Posterior vena cava (tissue), 2 donors: ENCODE measurements at regions of chr3 and their contacts with region 1.

Region 1: DNA sequence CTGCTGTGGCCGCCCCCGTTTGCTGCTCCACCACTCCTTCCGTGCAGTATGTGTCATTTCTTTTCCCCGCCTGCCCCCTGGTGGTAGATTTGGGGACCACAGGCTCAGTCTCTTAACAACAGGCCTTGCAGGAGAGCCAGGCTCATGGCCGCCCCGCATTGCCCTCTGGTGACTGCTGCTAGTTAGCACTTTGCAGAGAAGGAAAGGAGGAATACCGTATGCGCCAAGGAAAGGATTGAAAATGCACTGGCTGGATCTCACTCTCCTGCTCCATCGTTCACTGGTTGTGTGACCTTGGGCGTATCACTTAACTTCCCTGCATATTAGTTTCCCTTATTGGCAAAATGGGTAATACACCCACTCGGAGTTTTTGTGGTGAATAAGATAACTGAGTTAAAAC is 39.3 kb upstream of the PXYLP1 start:
- DNase-seq: peak; percentile 99

Region 2: DNA sequence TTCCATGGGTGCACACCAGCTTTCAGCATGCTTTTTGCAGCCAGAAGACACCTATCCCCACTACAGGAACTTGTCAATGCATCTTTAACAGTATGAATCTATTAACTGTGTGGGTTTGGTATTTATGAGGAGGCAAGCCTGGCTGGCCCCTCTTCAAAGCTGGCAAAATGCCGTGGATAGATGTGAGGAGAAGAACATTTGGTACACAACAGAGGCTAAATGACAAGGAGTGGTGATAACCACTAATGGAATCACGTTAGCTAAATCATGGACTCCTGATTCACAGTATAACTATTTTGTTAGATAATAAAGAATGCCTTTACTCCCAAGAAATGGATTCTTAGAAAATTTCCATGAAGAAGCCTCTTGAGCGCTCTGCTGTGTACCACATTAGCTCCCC is 1070.2 kb before region 1 on chr3:
- intact Hi-C with region 1: loop called in 1 of 2 experiments (anchors 5 kb)
- DNase-seq: no peak

Region 3: GRCh38 chr3:140341203-140341602 is 851.1 kb before region 1 on chr3:
- intact Hi-C with region 1: no loop called
- DNase-seq: no peak

Region 4: GRCh38 chr3:141000027-141000663 is 192.2 kb before region 1 on chr3:
- intact Hi-C with region 1: loop called (anchors 5 kb)
- DNase-seq: peak; percentile 85

Region 5: DNA sequence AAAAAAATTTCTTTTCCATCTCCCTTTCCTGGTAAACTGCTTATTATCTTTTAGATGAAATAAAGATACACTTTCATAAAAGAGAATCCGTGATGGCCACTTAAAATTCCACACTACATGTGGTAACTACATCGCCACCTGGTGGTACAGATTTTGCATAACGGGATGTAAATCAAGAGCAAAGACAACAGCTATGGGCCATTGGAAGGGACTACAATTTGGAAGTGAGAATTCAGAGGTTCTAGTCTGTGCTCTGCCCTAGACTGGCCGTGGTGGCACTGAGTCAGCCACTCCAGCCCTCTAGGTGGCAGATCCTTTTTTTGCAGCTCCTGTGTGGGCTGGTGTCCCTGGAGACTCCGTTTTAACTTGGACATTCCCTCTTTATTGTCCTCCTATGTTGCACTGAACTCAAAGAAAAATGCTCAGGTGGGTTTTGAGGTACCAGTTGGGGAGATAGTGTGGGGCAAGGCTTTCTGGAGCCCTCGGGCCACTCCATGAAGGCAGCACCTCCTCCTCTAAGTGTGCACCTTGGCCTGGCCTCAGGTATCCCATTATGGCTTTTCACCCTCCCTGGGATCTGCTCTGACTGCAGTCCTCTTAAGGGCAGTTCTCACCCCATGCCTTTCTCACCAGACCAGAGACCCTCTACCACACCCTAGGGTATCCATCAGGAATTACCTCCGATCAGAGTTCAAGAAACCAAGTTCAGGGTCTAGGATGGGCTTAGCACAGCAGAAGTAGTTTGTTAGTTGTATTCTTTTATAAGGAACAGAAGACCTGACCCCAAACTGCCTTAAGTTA is 86.3 kb before region 1 on chr3:
- intact Hi-C with region 1: loop called in 1 of 2 experiments (anchors 5 kb)
- DNase-seq: peak; percentile 43

Region 6: GRCh38 chr3:141151439-141151838 is 40.9 kb before region 1 on chr3:
- intact Hi-C with region 1: no loop called
- DNase-seq: peak; percentile 72

Region 7: DNA sequence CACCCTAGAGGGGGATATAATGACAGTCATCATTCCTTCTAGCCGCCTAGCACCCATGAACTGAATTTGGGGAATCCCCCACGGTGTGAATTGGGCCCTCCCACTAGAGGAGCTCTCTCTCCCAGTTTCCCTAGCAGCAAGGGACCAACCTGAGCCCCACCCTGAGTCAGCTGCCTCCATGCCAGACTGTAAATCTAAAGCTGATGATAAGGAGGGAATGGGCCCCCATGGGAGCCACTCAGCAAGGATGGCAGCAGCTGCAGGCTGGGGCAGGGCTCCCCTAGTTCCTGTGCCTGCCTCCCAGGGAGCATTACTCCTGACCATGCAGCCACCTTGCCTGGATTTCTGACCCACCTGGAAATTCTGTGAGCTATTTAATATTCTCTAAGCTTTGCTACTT is 17.7 kb before region 1 on chr3:
- intact Hi-C with region 1: no loop called
- DNase-seq: peak; percentile 55